GM10248 (cell line): ENCODE measurements at regions of chr20 and their contacts with region 1.

Region 1: GRCh38 chr20:38033310-38034107 is at the starts of genes RPRD1B and TTI1:
- DNase-seq: peak; percentile 88
- CTCF ChIP-seq: no peak

Region 2: GRCh38 chr20:38043512-38044300 is 10.2 kb after region 1 on chr20:
- CTCF ChIA-PET with region 1: interaction called, 8 read pairs
- POLR2A ChIA-PET with region 1: interaction called, 11 read pairs
- DNase-seq: no peak
- CTCF ChIP-seq: no peak

Region 3: GRCh38 chr20:38049800-38050199 is 16.3 kb after region 1 on chr20:
- CTCF ChIA-PET with region 1: interaction called, 13 read pairs
- POLR2A ChIA-PET with region 1: interaction called, 11 read pairs
- DNase-seq: no peak
- CTCF ChIP-seq: no peak